Uterus (tissue), 4 donors: ENCODE measurements at regions of chr20 and their contacts with region 1.

Region 1: GRCh38 chr20:44193801-44194200 is 6.8 kb upstream of the JPH2 start:
- DNase-seq: no peak
- H3K4me3 ChIP-seq: no peak overlapping the region
- H3K27ac ChIP-seq: no peak overlapping the region
- H3K4me1 ChIP-seq: peaks cover 0 to 4% of the 10 kb centered on the region in 2 donors
- H3K27me3 ChIP-seq: no peaks in the 10 kb centered on the region
- CTCF ChIP-seq: no peak
- POLR2A ChIP-seq: no peak

Region 2: GRCh38 chr20:43767686-43768474 is 425.9 kb before region 1 on chr20:
- intact Hi-C with region 1: no loop called
- DNase-seq: no peak
- H3K4me3 ChIP-seq: no peak overlapping the region
- H3K27ac ChIP-seq: no peak overlapping the region
- H3K4me1 ChIP-seq: no peaks in the 10 kb centered on the region
- H3K27me3 ChIP-seq: no peaks in the 10 kb centered on the region
- CTCF ChIP-seq: no peak
- POLR2A ChIP-seq: no peak

Region 3: DNA sequence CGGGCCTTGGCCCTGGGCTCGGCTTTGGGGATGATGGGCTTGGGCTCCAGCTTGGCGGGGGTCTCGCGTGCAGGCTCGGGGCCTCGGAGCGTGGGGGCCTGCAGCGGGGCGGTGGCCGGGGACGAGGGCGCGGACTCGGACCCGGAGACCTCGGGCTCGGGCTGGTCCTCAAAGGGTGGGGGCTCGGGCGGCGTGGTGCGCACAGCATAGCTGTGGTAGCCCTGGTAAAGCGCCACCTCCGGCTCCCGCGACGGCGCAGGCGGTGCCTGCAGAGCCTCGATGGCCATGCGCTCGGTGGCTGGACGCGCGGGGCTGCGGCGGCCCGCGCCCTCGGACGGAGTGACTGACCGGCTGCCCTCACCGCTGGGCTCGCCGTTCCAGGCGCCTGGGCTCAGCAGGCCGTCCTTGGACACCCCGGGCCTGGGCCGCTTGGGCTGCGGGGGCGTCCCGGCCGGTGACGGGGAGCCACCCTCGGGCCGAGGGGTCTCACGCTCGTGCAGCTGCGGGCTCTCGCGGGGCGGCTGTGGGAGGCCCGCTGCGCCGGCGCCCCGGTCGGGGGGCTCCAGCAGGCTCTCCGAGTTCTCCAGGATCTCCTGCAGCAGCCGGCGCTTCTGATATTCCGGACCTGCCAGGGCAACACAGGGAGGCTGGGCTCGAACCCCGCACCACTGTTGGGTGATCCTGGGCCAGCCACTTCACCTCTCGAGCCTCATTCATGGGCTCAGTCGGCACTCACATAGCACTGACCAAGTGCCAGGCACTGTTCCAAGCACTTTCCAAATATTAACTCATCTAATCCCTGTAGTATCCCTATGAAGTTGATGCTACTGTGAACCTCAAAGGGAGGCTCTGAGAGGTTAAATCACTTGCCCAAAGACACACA is 77.8 kb before region 1 on chr20:
- intact Hi-C with region 1: loop called (anchors 5 kb)
- DNase-seq: no peak
- H3K4me3 ChIP-seq: no peak overlapping the region
- H3K27ac ChIP-seq: peak overlapping the region in 1 of 2 donors; percentile 70
- H3K4me1 ChIP-seq: no peaks in the 10 kb centered on the region
- H3K27me3 ChIP-seq: no peaks in the 10 kb centered on the region
- CTCF ChIP-seq: no peak
- POLR2A ChIP-seq: no peak